Activated CD8-positive, alpha-beta T cell treated with anti-CD3 and anti-CD28 coated beads for 36 hours (primary cell): ENCODE measurements at regions of chr1 and their contacts with region 1.

Region 1: DNA sequence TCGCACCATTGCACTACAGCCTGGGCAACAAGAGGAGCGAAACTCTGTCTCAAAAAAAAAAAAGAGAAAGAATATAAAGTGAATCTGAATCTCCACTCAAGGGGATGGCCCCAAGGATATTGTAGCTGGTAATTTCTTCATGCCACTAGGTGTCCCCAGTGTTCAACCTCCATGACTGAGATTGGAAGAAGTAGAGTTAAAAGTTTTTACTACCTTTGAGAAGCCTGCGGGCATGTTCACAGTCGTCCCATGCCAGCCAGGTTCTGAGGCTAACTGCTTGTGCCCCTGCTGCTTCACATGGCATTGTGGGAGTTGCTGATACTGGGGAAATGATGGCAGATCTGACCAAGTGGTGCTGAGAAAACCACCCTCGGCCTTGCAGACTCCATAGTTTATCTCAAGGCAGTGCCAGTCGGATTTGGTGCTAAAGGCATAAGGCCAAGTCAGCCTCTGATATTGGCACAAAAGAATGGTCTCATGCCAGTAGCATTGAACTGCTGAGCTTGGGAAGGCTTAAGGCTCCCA is 10.8 kb upstream of the SHISA4 start:
- DNase-seq: peak; percentile 44
- ATAC-seq: peak; percentile 73
- H3K4me3 Mint-ChIP-seq: no peak overlapping the region
- H3K27ac Mint-ChIP-seq: peak overlapping the region; percentile 35
- H3K4me1 Mint-ChIP-seq: no peaks in the 10 kb centered on the region
- H3K27me3 Mint-ChIP-seq: no peaks in the 10 kb centered on the region
- CTCF ChIP-seq: peak; percentile 72

Region 2: GRCh38 chr1:201955009-201955728 is 77.2 kb after region 1 on chr1 and contains the start of gene TIMM17A:
- CTCF ChIA-PET with region 1: no interaction called
- POLR2A ChIA-PET with region 1: interaction called, 10 read pairs
- intact Hi-C with region 1: no loop called
- DNase-seq: peak; percentile 97
- ATAC-seq: peak; percentile 100
- H3K4me3 Mint-ChIP-seq: peak within 1 kb of the TSS; percentile 98
- H3K27ac Mint-ChIP-seq: peak within 1 kb of the TSS; percentile 95
- H3K4me1 Mint-ChIP-seq: peaks cover 17% of the 10 kb centered on the region
- H3K27me3 Mint-ChIP-seq: no peaks in the 10 kb centered on the region
- CTCF ChIP-seq: no peak
- total RNA-seq, gene TIMM17A: 75.8 to 76.8 TPM